Caco-2 (cell line): ENCODE measurements at regions of chr11 and their contacts with region 1.

Region 1: GRCh38 chr11:102733232-102733875 is 8.6 kb upstream of the MMP8 start:
- DNase-seq: peak; percentile 89 to 92
- H3K4me3 ChIP-seq: no peak overlapping the region
- H3K4me3 Mint-ChIP-seq: no peak overlapping the region
- H3K27ac Mint-ChIP-seq: no peak overlapping the region
- H3K4me1 ChIP-seq: no peaks in the 10 kb centered on the region
- H3K4me1 Mint-ChIP-seq: no peaks in the 10 kb centered on the region
- H3K27me3 ChIP-seq: no peaks in the 10 kb centered on the region
- H3K27me3 Mint-ChIP-seq: peaks cover 2% of the 10 kb centered on the region
- CTCF ChIP-seq: peak; percentile 99

Region 2: GRCh38 chr11:102780491-102780918 is 47.2 kb after region 1 on chr11 and contains the start of gene MMP10:
- CTCF ChIA-PET with region 1: interaction called, 13 read pairs
- POLR2A ChIA-PET with region 1: no interaction called
- intact Hi-C with region 1: loop called (anchors 1 kb)
- DNase-seq: peak in 1 of 2 experiments; percentile 60
- H3K4me3 ChIP-seq: no peak within 1 kb of the TSS
- H3K4me3 Mint-ChIP-seq: no peak within 1 kb of the TSS
- H3K27ac Mint-ChIP-seq: no peak within 1 kb of the TSS
- H3K4me1 ChIP-seq: 0 out of 2 replicates have a peak, but pooled peaks cover 5% of the 10 kb centered on the region
- H3K4me1 Mint-ChIP-seq: peaks cover 15% of the 10 kb centered on the region
- H3K27me3 ChIP-seq: no peaks in the 10 kb centered on the region
- H3K27me3 Mint-ChIP-seq: no peaks in the 10 kb centered on the region
- CTCF ChIP-seq: peak; percentile 75 to 84
- total RNA-seq, gene MMP10: 0.16 and 1.1 TPM in 2 replicates

Region 3: GRCh38 chr11:102891736-102892135 is 158.4 kb after region 1 on chr11:
- CTCF ChIA-PET with region 1: no interaction called
- POLR2A ChIA-PET with region 1: no interaction called
- intact Hi-C with region 1: loop called (anchors 5 kb)
- DNase-seq: no peak
- H3K4me3 ChIP-seq: no peak overlapping the region
- H3K4me3 Mint-ChIP-seq: no peak overlapping the region
- H3K27ac Mint-ChIP-seq: no peak overlapping the region
- H3K4me1 ChIP-seq: no peaks in the 10 kb centered on the region
- H3K4me1 Mint-ChIP-seq: no peaks in the 10 kb centered on the region
- H3K27me3 ChIP-seq: no peaks in the 10 kb centered on the region
- H3K27me3 Mint-ChIP-seq: peaks cover 5% of the 10 kb centered on the region
- CTCF ChIP-seq: no peak

Region 4: DNA sequence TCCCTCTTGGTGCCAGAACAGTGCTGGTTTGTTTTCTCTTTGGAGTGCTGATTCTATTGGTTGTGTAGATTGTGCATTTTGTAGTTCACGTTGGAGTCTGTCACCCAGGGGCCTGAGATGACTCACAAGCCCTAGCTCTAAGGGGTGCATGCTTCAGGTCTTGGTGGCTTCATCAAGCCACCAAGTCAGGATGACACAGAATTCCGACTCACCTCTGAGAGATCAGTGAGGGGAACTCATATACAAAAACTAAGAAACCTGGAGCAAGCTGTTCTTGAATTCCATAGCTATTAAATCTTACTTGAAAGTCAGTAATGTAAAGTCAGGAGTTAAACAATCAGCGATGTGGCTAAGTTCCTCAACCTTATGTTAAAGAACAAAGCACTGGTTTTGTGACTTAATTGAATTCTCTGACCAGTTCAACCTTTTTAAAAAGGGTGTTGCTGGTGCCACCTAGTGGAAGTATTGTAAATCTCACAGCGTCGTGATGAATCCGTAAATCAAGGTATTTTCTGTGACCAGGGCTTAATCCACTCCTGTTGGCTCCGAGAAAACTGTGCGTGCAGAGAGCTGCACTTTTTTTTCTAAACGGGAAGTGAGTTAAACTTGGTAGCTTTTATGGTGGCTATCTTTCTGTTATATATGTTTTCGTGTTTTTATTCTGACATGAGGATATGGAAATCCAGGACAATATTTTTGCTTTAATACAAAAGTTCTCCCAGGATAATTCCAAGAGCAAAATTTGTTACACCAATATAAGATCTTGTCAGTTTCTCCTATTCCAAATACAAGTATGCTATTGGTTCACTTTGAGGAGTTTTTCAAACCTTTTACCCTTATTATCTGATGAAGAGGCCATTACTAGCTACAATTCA is 207.6 kb after region 1 on chr11:
- CTCF ChIA-PET with region 1: no interaction called
- POLR2A ChIA-PET with region 1: no interaction called
- intact Hi-C with region 1: loop called (anchors 1 kb)
- DNase-seq: peak; percentile 66 to 76
- H3K4me3 ChIP-seq: no peak overlapping the region
- H3K4me3 Mint-ChIP-seq: no peak overlapping the region
- H3K27ac Mint-ChIP-seq: no peak overlapping the region
- H3K4me1 ChIP-seq: no peaks in the 10 kb centered on the region
- H3K4me1 Mint-ChIP-seq: no peaks in the 10 kb centered on the region
- H3K27me3 ChIP-seq: no peaks in the 10 kb centered on the region
- H3K27me3 Mint-ChIP-seq: no peaks in the 10 kb centered on the region
- CTCF ChIP-seq: peak; percentile 89 to 90